Sciatic nerve (tissue), 2 donors: ENCODE measurements at regions of chr3 and their contacts with region 1.

Region 1: GRCh38 chr3:69161587-69162307 is 39.4 kb upstream of the LMOD3 start:
- DNase-seq: no peak
- ATAC-seq: peak; percentile 78

Region 2: DNA sequence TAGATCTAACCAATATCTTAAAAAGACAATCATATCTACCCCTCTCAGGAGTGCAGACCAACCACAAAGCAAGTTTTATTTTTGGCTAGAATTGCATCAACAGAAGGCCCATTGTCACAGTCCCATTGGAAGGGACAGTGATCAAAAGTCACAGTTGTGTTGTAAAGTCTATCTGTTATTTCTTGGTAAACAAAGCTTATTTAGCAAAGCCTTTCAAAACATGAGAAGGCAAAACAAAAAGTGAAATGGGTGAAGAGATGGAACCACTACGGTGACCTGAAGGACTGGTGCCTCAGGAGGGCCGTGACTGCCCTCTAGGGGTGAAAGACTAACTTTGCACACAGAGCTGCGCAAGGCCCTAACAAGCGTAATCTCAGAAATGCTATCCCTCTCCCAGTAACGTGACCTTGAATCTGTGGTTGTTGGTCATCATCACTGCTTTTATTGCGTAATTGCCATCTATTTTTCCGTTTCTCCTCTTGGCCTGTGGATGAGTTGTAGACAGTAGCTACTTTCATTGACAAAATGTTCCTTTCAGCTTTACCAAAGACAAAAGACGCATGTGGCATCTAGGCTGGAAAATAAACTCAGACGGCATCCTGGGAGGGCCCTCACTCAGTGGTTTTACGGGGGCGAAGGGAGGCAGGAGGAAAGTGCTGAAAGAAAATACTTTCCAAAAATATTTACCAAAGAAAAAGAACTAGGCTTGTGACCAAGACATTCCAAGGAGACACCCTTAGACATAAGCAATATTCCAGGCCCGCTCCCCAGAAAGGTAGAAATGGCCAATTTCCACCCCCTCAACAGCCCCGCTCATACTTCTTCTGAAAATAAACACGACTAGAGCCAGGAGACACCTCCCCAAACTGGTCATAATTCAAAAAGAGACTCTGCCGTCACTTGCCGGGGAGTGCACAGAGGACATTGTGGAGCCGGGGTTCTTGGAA is 144.8 kb after region 1 on chr3:
- intact Hi-C with region 1: loop called (anchors 5 kb)
- DNase-seq: peak; percentile 78
- ATAC-seq: peak; percentile 97

Region 3: GRCh38 chr3:69671082-69671952 is 509.6 kb after region 1 on chr3:
- intact Hi-C with region 1: loop called (anchors 5 kb)
- DNase-seq: no peak
- ATAC-seq: peak; percentile 53